ENCODE measurements at regions of chr16 and their contacts with region 1.

Region 1: GRCh38 chr16:81366316-81366932 is 51.7 kb downstream of the GAN start:
- DNase-seq: peak in 1 of 2 donors; percentile 75
- ATAC-seq: peak; percentile 82 to 88 (median 85)
- H3K4me3 ChIP-seq: no peak overlapping the region
- H3K4me3 Mint-ChIP-seq: no peak overlapping the region
- H3K27ac ChIP-seq: no peak overlapping the region
- H3K27ac Mint-ChIP-seq: no peak overlapping the region
- H3K4me1 ChIP-seq: peaks cover 9% of the 10 kb centered on the region
- H3K4me1 Mint-ChIP-seq: peaks cover 14 to 15% of the 10 kb centered on the region in 2 donors
- H3K27me3 ChIP-seq: no peaks in the 10 kb centered on the region
- H3K27me3 Mint-ChIP-seq: no peaks in the 10 kb centered on the region
- CTCF ChIP-seq: peak; percentile 77

Region 2: DNA sequence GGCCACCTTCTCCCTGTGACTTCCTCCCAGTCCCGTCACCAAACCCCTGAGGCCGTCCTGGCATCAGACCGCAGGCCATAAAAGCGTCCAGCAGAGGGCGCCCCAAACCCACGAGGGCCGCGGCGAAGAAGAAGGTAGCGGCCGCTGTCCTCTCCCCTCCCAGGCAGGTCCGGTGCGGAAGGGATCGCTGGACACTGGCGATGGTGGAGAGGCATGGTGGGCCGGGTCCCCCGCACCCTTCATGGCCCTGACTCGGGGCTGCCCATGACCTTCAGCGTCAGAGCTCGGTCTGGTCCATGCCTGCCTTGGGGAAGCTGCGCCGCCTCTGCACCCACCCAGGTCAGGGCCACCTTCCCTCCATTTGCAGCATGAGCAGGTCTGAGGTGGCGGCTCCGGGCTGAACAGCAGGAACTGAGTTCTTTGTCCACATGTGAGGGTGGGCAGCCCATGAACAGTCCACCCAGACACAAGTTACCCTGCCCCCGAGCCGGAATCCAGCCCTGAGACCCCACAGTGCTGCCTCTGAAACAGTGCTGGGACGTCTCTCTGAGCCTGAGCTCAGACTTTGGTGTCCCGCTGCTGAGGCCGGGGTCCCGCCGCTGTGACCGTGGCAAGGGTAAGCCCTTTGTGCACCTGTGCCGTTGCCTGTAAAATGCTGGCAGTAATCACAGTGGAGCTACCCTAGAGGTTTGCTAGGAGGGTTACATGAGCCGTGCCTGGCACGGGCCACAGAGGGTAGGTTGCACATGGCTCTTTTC is 37.4 kb after region 1 on chr16:
- intact Hi-C with region 1: loop called (anchors 1 kb)
- DNase-seq: peak; percentile 83 to 88
- ATAC-seq: peak; percentile 88 to 96 (median 95)
- H3K4me3 ChIP-seq: no peak overlapping the region
- H3K4me3 Mint-ChIP-seq: no peak overlapping the region
- H3K27ac ChIP-seq: no peak overlapping the region
- H3K27ac Mint-ChIP-seq: peak overlapping the region in 1 of 2 donors; percentile 36
- H3K4me1 ChIP-seq: peaks cover 11% of the 10 kb centered on the region
- H3K4me1 Mint-ChIP-seq: peaks cover 0 to 8% of the 10 kb centered on the region in 2 donors
- H3K27me3 ChIP-seq: no peaks in the 10 kb centered on the region
- H3K27me3 Mint-ChIP-seq: no peaks in the 10 kb centered on the region
- CTCF ChIP-seq: peak; percentile 98

Region 3: DNA sequence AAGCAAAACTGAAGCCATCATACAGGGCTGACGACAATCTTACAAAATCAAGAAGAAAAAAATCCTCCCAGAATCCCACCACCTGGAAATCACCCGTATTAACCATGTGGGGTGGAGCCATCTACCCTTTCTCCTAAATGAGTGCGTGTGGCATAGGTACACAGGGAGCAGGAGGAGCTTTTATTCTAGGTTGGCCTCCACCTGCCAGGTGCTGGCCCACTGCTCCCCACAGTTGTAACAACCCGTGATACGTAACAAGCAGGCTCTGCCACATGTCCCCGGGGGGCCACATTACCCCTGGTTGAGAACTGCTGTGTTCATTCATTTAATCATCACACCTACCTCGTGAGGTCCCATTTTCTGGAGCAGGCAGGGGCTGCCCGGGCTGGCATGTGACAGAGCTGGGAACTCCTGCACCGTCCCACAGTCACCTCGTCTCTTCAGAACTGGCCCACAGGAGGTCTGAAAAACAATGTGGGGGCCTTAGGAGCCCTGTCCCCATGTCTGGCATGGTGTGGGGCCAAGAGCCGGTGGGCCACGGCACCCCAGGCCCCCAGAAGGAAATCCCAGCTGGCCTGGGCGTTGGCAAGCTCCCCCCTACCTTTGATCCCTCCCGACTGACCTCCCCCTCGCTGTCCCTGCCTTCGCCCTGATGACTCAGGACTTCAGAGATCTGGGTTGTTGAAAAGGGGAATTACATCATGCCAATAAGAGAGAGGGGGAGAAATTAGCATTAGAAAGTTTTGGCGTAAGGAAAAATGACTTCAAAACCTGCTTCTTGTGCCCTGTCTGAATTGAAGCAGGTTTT is 91.1 kb after region 1 on chr16:
- intact Hi-C with region 1: no loop called
- DNase-seq: no peak
- ATAC-seq: peak in 1 of 3 donors; percentile 26
- H3K4me3 ChIP-seq: no peak overlapping the region
- H3K4me3 Mint-ChIP-seq: no peak overlapping the region
- H3K27ac ChIP-seq: no peak overlapping the region
- H3K27ac Mint-ChIP-seq: peak overlapping the region; percentile 36 to 77
- H3K4me1 ChIP-seq: peaks cover 59% of the 10 kb centered on the region
- H3K4me1 Mint-ChIP-seq: peaks cover 56 to 84% of the 10 kb centered on the region in 2 donors
- H3K27me3 ChIP-seq: no peaks in the 10 kb centered on the region
- H3K27me3 Mint-ChIP-seq: no peaks in the 10 kb centered on the region
- CTCF ChIP-seq: no peak

Region 4: GRCh38 chr16:81696961-81697615 is 330.7 kb after region 1 on chr16:
- intact Hi-C with region 1: loop called (anchors 1 kb)
- DNase-seq: peak; percentile 28 to 57
- ATAC-seq: peak; percentile 43 to 59 (median 52)
- H3K4me3 ChIP-seq: no peak overlapping the region
- H3K4me3 Mint-ChIP-seq: no peak overlapping the region
- H3K27ac ChIP-seq: no peak overlapping the region
- H3K27ac Mint-ChIP-seq: no peak overlapping the region
- H3K4me1 ChIP-seq: no peaks in the 10 kb centered on the region
- H3K4me1 Mint-ChIP-seq: no peaks in the 10 kb centered on the region
- H3K27me3 ChIP-seq: no peaks in the 10 kb centered on the region
- H3K27me3 Mint-ChIP-seq: no peaks in the 10 kb centered on the region
- CTCF ChIP-seq: peak; percentile 43

Region 5: DNA sequence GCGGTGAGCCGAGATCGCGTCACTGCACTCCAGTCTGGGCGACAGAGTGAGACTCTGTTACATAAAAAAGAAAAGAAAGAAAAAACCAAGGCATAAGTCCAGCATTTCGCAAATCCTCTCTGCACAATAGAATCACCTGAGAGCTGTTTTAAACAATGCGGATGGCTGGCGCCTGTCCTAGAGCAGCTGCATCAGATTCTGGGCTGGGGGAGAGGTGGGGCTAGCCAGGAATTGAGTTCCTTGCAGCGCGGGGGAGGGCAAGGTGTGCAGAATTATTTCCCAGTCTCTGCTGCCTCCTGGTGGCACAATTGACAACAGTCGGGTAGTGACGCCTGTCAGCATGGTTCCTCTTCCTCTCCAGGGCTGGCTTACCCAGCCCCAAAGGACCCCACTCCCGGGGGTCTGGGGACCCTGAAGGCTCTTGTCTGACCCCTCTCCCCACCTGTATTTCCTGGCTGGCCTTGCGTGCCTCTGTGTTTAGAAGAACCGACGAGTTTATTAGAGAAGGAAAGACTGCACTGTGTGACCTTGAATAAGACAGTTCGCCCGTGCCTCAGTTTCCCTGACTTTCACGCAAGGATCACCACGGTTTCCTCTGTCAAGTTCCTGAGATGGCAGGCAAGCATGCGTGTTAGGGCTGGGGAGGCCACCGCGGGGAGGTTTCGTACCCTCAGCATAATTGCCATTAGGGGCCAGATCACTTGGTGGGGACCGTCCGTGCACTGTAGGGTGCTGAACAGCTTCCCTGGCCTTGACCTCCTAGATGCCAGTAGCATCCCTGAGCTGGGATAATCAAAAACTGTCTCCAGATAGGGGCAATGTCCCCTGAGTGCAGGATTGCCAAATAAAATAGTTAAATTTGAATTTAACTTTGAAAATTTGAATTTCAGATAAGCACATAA is 371.7 kb after region 1 on chr16:
- intact Hi-C with region 1: loop called (anchors 1 kb)
- DNase-seq: peak; percentile 80 to 93
- ATAC-seq: peak; percentile 89 to 97 (median 96)
- H3K4me3 ChIP-seq: peak overlapping the region; percentile 11
- H3K4me3 Mint-ChIP-seq: peak overlapping the region; percentile 58
- H3K27ac ChIP-seq: no peak overlapping the region
- H3K27ac Mint-ChIP-seq: peak overlapping the region in 1 of 2 donors; percentile 75
- H3K4me1 ChIP-seq: peaks cover 35% of the 10 kb centered on the region
- H3K4me1 Mint-ChIP-seq: peaks cover 7 to 19% of the 10 kb centered on the region in 2 donors
- H3K27me3 ChIP-seq: no peaks in the 10 kb centered on the region
- H3K27me3 Mint-ChIP-seq: no peaks in the 10 kb centered on the region
- CTCF ChIP-seq: peak; percentile 88

Region 6: GRCh38 chr16:82229796-82230619 is 863.6 kb after region 1 on chr16:
- intact Hi-C with region 1: loop called (anchors 5 kb)
- DNase-seq: peak; percentile 46 to 77
- ATAC-seq: peak in 2 of 3 donors; percentile 65 to 67
- H3K4me3 ChIP-seq: no peak overlapping the region
- H3K4me3 Mint-ChIP-seq: no peak overlapping the region
- H3K27ac ChIP-seq: no peak overlapping the region
- H3K27ac Mint-ChIP-seq: no peak overlapping the region
- H3K4me1 ChIP-seq: no peaks in the 10 kb centered on the region
- H3K4me1 Mint-ChIP-seq: peaks cover 0 to 4% of the 10 kb centered on the region in 2 donors
- H3K27me3 ChIP-seq: no peaks in the 10 kb centered on the region
- H3K27me3 Mint-ChIP-seq: peaks cover 22 to 43% of the 10 kb centered on the region in 2 donors
- CTCF ChIP-seq: peak; percentile 89

Measured in natural killer cell (primary cell).